RWPE1 (cell line): ENCODE measurements at regions of chr19 and their contacts with region 1.

Region 1: GRCh38 chr19:11482384-11483050 is 1.7 kb upstream of the ELAVL3 start:
- DNase-seq: peak; percentile 84
- H3K27ac ChIP-seq: no peak overlapping the region
- CTCF ChIP-seq: peak; percentile 94

Region 2: DNA sequence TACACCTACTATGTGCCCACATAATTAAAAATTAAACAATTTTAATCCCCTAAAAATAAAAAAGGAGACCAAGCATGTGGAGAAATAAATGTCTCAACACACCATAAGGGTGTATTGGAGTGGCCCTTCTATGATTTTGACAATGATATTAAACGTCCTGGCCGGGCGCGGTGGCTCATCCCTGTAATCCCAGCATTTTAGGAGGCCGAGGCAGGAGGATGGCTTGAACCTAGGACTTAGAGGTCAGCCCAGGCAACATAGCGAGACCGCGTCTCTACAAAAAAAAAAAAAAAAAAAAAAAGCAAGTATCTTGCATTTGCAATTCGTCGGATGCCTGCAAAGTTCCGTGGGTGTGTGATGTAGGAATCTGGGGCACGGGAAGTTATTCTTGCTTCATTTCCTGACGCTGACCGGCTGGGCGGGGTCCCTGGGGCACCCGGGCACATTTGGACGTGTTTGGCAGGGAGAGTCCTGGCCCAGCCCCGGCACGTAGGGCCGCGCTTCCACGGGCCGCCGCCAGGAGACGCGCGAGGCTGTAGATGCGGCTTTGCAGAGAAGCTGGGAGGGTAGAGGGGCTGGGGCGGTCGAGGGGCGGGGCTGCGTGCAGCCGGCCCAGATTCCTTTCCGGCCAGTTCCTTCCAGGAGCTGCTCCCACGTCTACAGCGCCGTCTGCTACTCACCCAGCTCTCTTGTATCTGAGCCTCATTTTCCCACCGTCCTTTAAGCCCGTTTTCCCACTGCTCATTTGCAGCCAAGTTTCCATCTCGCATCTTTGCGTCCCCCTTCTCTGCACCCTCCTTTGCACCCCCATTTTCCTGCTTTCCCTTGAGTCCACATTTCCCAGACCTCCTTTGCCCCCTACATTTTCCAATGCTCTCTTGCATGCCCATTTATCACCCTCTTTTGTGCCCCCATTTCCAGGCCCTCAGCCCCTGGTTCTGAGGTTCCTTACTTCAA is 188.8 kb before region 1 on chr19:
- CTCF ChIA-PET with region 1: interaction called, 15 read pairs
- POLR2A ChIA-PET with region 1: interaction called, 4 read pairs
- DNase-seq: peak; percentile 94
- H3K27ac ChIP-seq: peak overlapping the region; percentile 80
- CTCF ChIP-seq: peak; percentile 99

Region 3: GRCh38 chr19:11355160-11356073 is 127.1 kb before region 1 on chr19 and contains the start of gene PLPPR2:
- CTCF ChIA-PET with region 1: no interaction called
- POLR2A ChIA-PET with region 1: no interaction called
- DNase-seq: peak; percentile 91
- H3K27ac ChIP-seq: peak within 1 kb of the TSS; percentile 65
- CTCF ChIP-seq: no peak